ENCODE measurements at regions of chr4 and their contacts with region 1.

Region 1: GRCh38 chr4:184474263-184475095 is at the start of gene IRF2:
- DNase-seq: peak; percentile 98
- ATAC-seq: peak; percentile 90 to 95 (median 91)
- H3K4me3 ChIP-seq: peak within 1 kb of the TSS; percentile 71 to 100 (median 90)
- H3K27ac ChIP-seq: peak within 1 kb of the TSS; percentile 88 to 100 (median 98)
- H3K4me1 ChIP-seq: peaks cover 4 to 67% (median 47%) of the 10 kb centered on the region in 12 donors
- H3K27me3 ChIP-seq: no peaks in the 10 kb centered on the region
- CTCF ChIP-seq: peak in 2 of 12 donors; percentile 4 to 18
- POLR2A ChIP-seq: peak in 1 of 2 donors; percentile 94
- total RNA-seq, gene IRF2: 21.7 to 47.2 (median 28.7) TPM

Region 2: DNA sequence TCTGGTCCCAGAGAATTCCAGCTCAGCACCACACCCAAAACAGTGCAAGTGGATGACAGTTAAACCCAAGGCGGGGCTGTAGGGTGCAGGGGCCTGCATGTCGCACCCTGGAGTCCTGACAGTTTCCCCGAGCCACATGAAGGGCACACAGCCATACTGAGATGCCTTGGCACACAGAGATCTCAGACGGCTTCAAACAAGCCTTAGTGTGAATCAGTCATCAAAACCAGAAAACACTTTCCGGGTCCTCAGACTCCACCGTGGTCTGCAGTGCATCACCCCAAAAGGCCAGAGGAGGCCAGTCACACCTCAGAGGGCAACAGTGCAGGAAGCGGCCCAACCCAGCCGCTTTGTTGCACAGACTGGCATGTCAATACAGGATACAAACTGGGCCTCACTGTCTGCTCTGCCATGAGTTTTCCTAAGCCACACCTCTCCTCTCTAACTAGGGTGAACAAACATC is 192.2 kb before region 1 on chr4:
- intact Hi-C with region 1: loop called in 5 of 10 experiments (anchors 5 to 10 kb)
- DNase-seq: no peak
- ATAC-seq: peak in 3 of 4 donors; percentile 56 to 71 (median 65)
- H3K4me3 ChIP-seq: no peak overlapping the region
- H3K27ac ChIP-seq: peak overlapping the region in 4 of 12 donors; percentile 17 to 39 (median 26)
- H3K4me1 ChIP-seq: peaks cover 0 to 33% (median 6%) of the 10 kb centered on the region in 12 donors
- H3K27me3 ChIP-seq: no peaks in the 10 kb centered on the region
- CTCF ChIP-seq: peak in 2 of 12 donors; percentile 18 to 25
- POLR2A ChIP-seq: no peak

Region 3: DNA sequence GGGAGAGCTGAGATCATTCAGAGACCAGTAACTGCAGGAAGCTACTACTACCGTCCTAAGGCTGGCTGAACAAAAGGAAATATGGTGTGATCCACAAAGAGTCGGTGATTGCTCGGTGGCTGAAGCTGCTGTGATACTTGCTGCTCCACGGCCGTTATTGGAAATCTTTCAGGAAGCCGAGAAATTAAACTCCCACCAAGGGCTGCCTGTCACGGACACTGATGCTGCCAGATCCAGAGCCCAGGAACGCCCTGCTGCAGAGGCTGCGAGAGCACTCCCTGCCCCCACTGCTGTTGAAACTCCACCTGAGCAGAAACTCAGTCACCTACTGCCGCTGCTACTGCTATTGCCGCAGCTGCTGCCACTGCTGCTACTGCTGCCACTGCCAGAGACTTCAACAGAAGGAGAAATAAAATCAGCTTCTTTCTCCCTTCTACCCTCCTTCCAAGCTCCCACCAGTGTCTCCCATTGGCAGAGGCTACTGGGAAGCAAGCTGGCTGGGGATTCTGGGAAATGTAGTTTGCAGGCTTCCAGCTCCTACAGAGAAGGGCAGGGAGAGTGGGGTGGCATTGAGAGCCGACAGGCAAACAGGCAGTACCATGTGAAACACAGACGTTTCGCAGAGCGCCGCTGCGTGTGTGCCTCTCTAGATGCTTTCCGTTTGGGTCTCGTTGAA is 130.8 kb before region 1 on chr4:
- intact Hi-C with region 1: loop called in 8 of 10 experiments (anchors 1 to 10 kb)
- DNase-seq: peak; percentile 75 to 85 (median 83)
- ATAC-seq: peak; percentile 75 to 84 (median 76)
- H3K4me3 ChIP-seq: peak overlapping the region; percentile 31 to 77 (median 62)
- H3K27ac ChIP-seq: peak overlapping the region in 11 of 12 donors; percentile 71 to 94 (median 85)
- H3K4me1 ChIP-seq: peaks cover 8 to 71% (median 47%) of the 10 kb centered on the region in 12 donors
- H3K27me3 ChIP-seq: no peaks in the 10 kb centered on the region
- CTCF ChIP-seq: no peak
- POLR2A ChIP-seq: no peak

Region 4: DNA sequence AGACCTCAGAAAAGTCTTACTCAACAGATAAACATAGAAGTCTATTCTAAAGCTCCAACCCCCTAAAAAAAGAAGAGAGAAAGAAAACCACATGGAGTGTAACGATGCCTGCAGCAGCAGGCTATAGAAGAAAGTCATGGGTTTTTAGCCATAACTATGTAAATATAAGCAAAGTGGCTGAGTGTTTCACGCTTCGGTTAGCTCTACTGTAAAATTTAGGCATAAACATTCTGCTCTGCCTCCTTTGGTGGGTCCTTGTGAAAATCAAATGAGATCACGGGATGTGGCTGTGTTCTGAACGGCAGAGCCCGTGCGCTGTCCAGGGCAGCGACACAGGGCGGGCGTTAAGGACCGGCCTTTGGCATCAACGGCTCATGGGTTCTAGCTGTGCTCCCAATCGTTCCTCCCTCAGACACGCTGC is 78.5 kb before region 1 on chr4:
- intact Hi-C with region 1: loop called in 2 of 10 experiments (anchors 5 to 10 kb)
- DNase-seq: no peak
- ATAC-seq: no peak
- H3K4me3 ChIP-seq: no peak overlapping the region
- H3K27ac ChIP-seq: peak overlapping the region; percentile 27 to 92 (median 70)
- H3K4me1 ChIP-seq: peaks cover 6 to 88% (median 34%) of the 10 kb centered on the region in 12 donors
- H3K27me3 ChIP-seq: no peaks in the 10 kb centered on the region
- CTCF ChIP-seq: no peak
- POLR2A ChIP-seq: no peak

Region 5: GRCh38 chr4:184420881-184421416 is 53.5 kb before region 1 on chr4:
- intact Hi-C with region 1: loop called in 1 of 10 experiments (anchors 10 kb)
- DNase-seq: no peak
- ATAC-seq: no peak
- H3K4me3 ChIP-seq: no peak overlapping the region
- H3K27ac ChIP-seq: peak overlapping the region in 2 of 12 donors; percentile 16 to 46
- H3K4me1 ChIP-seq: peaks cover 6 to 87% (median 46%) of the 10 kb centered on the region in 12 donors
- H3K27me3 ChIP-seq: no peaks in the 10 kb centered on the region
- CTCF ChIP-seq: no peak
- POLR2A ChIP-seq: no peak

Region 6: DNA sequence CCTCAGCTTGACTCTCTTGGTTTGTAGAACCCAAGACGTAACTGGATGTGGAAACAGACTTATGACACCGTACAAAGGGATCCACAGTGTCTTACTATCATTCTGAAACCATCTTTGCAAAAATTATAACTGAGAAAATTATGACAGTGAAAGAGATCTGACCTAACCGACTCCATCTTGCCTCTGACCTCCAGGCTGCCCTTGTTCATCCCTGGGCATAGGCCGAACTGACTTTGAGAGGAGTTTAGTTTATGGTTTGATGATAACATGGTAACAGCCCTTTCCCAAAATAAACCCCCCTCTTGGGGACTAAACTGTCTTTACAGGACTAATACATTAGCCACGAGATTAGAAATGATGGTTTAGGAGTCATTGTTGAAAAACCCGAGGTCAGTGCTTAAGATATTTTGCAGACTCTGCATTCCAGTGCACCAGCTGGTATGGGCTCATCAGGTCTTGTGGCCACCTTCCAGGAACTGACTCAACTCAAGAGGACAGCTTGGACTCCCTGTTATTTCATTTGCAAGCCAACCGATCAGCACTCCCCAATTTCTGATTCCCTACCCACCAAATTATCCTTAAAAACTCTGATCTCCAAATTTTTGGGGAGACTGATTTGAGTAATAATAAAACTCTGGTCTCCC is 125.1 kb after region 1 on chr4:
- intact Hi-C with region 1: no loop called
- DNase-seq: no peak
- ATAC-seq: peak in 1 of 4 donors; percentile 47
- H3K4me3 ChIP-seq: no peak overlapping the region
- H3K27ac ChIP-seq: no peak overlapping the region
- H3K4me1 ChIP-seq: peaks cover 0 to 13% (median 7%) of the 10 kb centered on the region in 12 donors
- H3K27me3 ChIP-seq: no peaks in the 10 kb centered on the region
- CTCF ChIP-seq: no peak
- POLR2A ChIP-seq: no peak

Measured in heart left ventricle (tissue), 16 donors.